A549 (cell line): ENCODE measurements at regions of chr12 and their contacts with region 1.

Region 1: GRCh38 chr12:117367011-117367638 is 5.7 kb upstream of the NOS1 start:
- DNase-seq: peak; percentile 85 to 90
- ATAC-seq: peak; percentile 41 to 86; a peak in 4 of 6 replicates
- H3K4me3 ChIP-seq: no peak overlapping the region
- H3K27ac ChIP-seq: peak overlapping the region; percentile 13 to 36; a peak in 3 of 6 replicates
- H3K4me1 ChIP-seq: 0 out of 3 replicates have a peak, but pooled peaks cover 3% of the 10 kb centered on the region
- CTCF ChIP-seq: peak; percentile 96
- EP300 ChIP-seq: no peak
- POLR2A ChIP-seq: no peak
- RAD21 ChIP-seq: peak; percentile 98 to 99

Region 2: DNA sequence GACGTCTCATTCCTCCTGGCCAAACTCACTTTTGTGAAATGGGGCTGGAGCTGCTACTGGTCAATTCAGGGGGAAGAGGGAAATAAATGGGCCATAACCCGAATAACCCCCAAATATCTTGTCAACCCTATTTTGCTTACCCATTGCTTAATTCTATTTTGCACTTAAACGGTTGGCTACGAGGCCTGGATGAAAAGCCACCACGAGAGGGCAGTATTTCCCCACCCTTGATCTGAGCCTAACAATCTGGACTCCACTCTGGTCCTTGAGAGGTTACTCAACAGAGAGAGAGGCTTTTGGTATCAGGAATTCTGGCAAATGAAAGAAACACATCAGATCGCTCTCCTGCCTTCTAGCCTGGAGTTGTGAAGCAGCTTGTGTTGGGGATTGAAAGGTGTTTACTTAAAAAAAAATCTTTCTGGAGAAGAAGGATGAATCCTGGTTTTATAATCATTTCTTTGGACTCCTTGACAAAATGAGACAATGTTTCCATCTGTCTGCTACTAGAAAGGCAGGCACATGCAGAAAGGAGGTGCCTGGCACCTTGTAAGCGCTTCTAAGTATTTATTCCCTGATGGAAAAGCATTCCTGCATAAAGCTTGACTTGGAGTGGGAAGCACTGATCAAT is 154.4 kb before region 1 on chr12:
- CTCF ChIA-PET with region 1: interaction called, 27 read pairs
- POLR2A ChIA-PET with region 1: no interaction called
- DNase-seq: peak; percentile 79 to 87
- ATAC-seq: peak; percentile 86 to 96
- H3K4me3 ChIP-seq: no peak overlapping the region
- H3K27ac ChIP-seq: peak overlapping the region in 1 of 2 experiments; percentile 5; a peak in 1 of 6 replicates
- H3K4me1 ChIP-seq: 0 out of 3 replicates have a peak, but pooled peaks cover 5% of the 10 kb centered on the region
- CTCF ChIP-seq: peak; percentile 96
- EP300 ChIP-seq: no peak
- POLR2A ChIP-seq: no peak
- RAD21 ChIP-seq: peak; percentile 92 to 98

Region 3: GRCh38 chr12:117377744-117378143 is 10.6 kb after region 1 on chr12:
- CTCF ChIA-PET with region 1: interaction called, 28 read pairs
- POLR2A ChIA-PET with region 1: no interaction called
- DNase-seq: peak in 1 of 2 experiments; percentile 42
- ATAC-seq: peak in 1 of 2 experiments; percentile 67; a peak in 3 of 6 replicates
- H3K4me3 ChIP-seq: no peak overlapping the region
- H3K27ac ChIP-seq: no peak overlapping the region
- H3K4me1 ChIP-seq: no peaks in the 10 kb centered on the region
- CTCF ChIP-seq: no peak
- EP300 ChIP-seq: no peak
- POLR2A ChIP-seq: no peak
- RAD21 ChIP-seq: no peak

Region 4: DNA sequence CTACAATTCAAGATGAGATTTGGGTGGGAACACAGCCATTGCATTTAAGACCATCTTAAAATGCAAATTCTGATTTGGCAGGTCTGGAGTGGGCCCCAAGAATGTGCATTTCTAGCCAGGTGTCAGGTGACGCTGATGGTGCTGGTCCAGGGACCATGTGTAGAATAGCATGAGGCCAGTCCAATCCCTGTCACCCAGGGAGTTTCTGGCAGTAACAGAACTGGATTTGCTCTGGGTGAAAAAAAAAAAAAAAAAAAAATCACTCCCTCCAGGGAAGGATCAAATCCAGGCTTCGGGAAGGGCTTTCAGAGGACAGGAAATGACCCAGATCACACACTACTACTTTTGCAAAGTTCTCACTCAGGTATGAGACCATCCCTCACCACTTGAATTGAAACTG is 207.5 kb after region 1 on chr12:
- CTCF ChIA-PET with region 1: interaction called, 315 read pairs
- POLR2A ChIA-PET with region 1: no interaction called
- DNase-seq: no peak
- ATAC-seq: no peak
- H3K4me3 ChIP-seq: no peak overlapping the region
- H3K27ac ChIP-seq: no peak overlapping the region
- H3K4me1 ChIP-seq: no peaks in the 10 kb centered on the region
- CTCF ChIP-seq: no peak
- EP300 ChIP-seq: no peak
- POLR2A ChIP-seq: no peak
- RAD21 ChIP-seq: no peak

Region 5: DNA sequence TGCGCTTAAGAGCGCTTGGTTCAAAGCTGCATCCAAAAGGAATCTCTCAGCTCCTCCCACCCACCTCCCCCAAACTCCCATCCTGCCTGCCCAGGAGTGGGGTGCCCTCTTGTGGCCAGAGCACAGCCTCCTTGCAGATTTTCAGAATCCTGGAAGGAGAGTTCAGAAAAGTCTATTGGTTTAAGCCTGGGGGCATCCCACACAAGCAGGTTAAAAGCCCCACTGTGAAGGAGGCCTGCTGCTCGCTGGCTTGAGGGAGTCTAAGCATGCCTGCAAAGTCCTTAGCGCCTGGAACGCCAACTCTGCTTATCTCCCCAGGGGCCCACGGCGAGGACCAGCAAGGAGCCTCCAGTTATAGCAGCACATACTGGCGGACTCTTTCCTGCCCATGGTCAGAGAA is 304.6 kb after region 1 on chr12:
- CTCF ChIA-PET with region 1: interaction called, 16 read pairs
- POLR2A ChIA-PET with region 1: no interaction called
- DNase-seq: peak; percentile 71 to 73
- ATAC-seq: peak; percentile 46 to 86; a peak in 4 of 6 replicates
- H3K4me3 ChIP-seq: no peak overlapping the region
- H3K27ac ChIP-seq: peak overlapping the region in 1 of 2 experiments; percentile 57; a peak in 2 of 6 replicates
- H3K4me1 ChIP-seq: 0 out of 3 replicates have a peak, but pooled peaks cover 3% of the 10 kb centered on the region
- CTCF ChIP-seq: peak; percentile 64
- EP300 ChIP-seq: no peak
- POLR2A ChIP-seq: no peak
- RAD21 ChIP-seq: peak; percentile 80 to 93

Region 6: GRCh38 chr12:117857632-117858612 is 490.8 kb after region 1 on chr12:
- CTCF ChIA-PET with region 1: interaction called, 24 read pairs
- POLR2A ChIA-PET with region 1: no interaction called
- DNase-seq: peak; percentile 70 to 79
- ATAC-seq: peak; percentile 49 to 64; a peak in 4 of 6 replicates
- H3K4me3 ChIP-seq: no peak overlapping the region
- H3K27ac ChIP-seq: peak overlapping the region; percentile 34 to 44; a peak in 4 of 6 replicates
- H3K4me1 ChIP-seq: peaks cover 29% of the 10 kb centered on the region
- CTCF ChIP-seq: peak; percentile 54
- EP300 ChIP-seq: no peak
- POLR2A ChIP-seq: no peak
- RAD21 ChIP-seq: peak in 1 of 2 experiments; percentile 27; a peak in 1 of 5 replicates